ENCODE measurements at regions of chr17 and their contacts with region 1.

Region 1: DNA sequence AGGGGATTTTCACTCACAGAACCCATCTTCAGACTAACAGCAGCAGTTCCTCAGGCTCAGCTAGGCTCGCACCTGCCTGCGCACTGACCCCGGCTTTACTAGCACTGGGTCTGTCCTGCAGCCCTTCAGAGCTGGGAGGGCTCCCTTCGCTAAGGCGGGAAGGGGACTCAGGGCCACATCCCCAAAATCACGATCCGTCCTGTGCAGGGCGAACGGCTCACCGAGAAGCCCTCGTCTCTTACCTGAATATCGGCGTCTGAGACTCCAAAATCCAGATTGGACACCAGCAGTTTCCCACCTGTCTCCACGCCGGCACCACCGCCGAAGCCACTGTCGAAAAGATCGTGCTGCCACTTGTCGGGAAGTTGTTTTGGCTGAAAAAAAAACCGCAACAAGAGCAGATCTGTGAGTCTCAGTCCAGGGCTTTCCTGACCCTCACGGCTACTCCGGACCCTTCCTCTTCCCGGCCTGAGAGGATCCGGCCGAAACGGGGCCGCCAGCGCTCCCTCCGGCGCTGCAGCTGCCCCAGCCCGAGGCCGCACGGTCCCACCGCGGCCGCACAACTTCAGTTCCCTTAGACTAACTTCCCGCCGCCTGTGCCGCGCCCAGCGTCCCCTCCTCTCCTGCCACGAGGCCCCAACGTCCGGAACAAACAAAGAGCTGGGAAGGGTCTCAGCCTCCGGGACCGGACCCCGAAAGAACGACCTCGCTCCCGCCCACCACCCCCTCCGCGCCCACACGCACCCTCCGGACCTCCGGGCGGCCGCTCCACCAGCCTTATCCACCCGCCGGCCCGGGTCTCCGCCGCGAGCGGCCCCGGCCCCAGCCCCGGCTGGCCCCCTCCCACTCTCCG is 713 bp downstream of the ALYREF start:
- DNase-seq: no peak
- H3K4me3 ChIP-seq: peak overlapping the region; percentile 88 to 98 (median 98)
- H3K27ac ChIP-seq: peak overlapping the region; percentile 94 to 96
- H3K4me1 ChIP-seq: peaks cover 4 to 7% of the 10 kb centered on the region in 2 donors
- H3K27me3 ChIP-seq: no peaks in the 10 kb centered on the region
- CTCF ChIP-seq: no peak
- POLR2A ChIP-seq: no peak

Region 2: DNA sequence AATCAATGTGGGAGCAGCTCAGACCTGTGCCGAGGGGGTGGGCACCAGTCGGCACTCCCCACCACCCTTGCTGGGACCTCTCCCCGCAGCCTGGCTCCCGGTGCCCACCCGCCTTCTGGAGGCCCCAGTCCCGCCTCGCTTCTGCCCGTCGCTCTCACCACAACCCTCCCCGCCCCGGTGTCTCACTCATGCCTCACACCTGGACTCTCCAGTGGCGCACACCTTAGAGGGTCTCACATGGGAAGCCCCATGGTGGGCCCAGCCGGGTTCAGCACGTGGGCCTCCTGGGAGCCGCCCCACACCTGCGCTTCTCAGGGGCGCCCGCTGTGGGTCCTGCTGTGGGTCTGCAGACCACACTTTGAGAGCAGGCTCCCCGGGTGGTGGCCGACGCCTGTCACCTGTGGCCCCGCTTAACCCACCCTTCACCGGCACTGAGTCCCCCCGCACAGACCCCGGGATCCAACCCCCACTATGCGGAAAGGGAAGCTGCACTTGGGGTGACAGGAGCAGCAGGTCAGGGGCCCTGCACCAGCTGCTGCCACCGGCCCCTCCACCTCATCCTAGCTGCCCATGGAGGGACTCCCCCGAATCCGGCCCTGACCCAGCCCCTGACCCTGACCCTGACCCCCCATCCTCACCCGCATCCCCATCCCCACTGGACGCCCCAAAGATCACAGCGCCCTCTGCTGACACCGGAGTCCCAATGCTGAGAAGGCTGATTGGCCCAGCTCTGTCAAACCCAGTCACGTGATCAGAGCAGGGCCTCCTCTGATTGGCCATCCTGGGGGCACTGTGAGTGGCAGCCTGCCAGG is 568.2 kb before region 1 on chr17:
- intact Hi-C with region 1: loop called (anchors 5 kb)
- DNase-seq: no peak
- H3K4me3 ChIP-seq: no peak overlapping the region
- H3K27ac ChIP-seq: no peak overlapping the region
- H3K4me1 ChIP-seq: peaks cover 10 to 11% of the 10 kb centered on the region in 2 donors
- H3K27me3 ChIP-seq: no peaks in the 10 kb centered on the region
- CTCF ChIP-seq: no peak
- POLR2A ChIP-seq: no peak

Region 3: DNA sequence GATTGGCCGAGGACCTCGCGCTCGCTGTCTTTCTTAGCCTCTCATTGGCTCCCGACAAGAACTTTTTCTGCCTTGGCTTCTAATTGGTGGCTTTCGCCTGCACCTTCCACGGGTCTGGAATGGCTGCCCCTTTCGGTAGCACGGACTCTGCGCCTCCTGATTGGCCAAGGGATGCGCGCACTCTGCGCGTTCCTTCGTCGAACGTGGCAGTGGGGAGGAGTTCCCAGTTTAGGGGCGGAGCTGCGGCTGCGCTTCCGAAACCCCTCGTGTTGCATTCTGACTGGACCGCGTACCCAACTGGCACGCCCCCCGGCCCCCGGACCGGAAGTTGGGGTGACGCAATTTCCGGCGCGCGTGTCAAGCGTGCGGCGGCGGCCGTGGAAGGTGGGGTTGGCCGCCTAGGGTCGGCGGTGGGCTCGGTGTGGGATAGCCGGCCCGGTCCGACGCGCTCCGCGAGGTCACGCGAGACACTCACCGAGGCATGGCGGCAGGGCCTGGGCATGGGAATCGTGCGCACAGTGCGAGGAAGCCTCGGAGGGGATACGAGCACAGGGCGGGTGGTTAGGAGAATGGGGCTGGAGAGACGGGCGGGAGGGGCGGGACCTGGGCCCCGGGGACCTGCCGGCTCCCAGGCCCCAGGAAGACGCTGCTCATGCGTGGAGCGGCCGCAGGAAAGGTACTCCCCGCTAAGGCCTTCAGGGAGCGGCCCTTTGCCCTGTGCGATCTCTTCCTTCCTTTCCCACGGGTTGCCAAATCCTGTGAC is 29.7 kb before region 1 on chr17:
- intact Hi-C with region 1: no loop called
- DNase-seq: peak; percentile 99 to 100
- H3K4me3 ChIP-seq: peak overlapping the region; percentile 93 to 100 (median 96)
- H3K27ac ChIP-seq: peak overlapping the region; percentile 98
- H3K4me1 ChIP-seq: peaks cover 10 to 15% of the 10 kb centered on the region in 2 donors
- H3K27me3 ChIP-seq: no peaks in the 10 kb centered on the region
- CTCF ChIP-seq: peak; percentile 36 to 74 (median 57)
- POLR2A ChIP-seq: peak; percentile 97

Region 4: DNA sequence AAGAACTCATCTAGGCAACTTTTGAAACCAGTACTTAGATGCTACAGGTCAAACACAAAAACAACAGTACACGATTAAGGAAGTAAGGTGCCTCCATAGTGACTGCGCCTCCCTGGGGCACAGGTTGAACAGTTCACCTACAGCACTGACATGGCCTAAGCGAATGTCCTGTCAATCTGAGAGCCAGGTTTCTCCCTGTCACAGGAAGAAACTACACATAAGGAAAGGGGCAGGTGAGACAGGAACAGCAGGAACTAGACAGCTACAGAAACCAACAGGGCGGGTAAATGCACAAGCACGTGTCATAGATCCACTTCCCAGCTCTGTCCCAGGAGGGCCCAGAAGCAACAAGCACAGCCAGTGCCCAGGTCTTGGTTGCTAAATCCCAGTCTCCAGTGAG is 11.6 kb before region 1 on chr17:
- intact Hi-C with region 1: loop called (anchors 2 kb)
- DNase-seq: no peak
- H3K4me3 ChIP-seq: no peak overlapping the region
- H3K27ac ChIP-seq: no peak overlapping the region
- H3K4me1 ChIP-seq: no peaks in the 10 kb centered on the region
- H3K27me3 ChIP-seq: no peaks in the 10 kb centered on the region
- CTCF ChIP-seq: no peak
- POLR2A ChIP-seq: no peak

Region 5: DNA sequence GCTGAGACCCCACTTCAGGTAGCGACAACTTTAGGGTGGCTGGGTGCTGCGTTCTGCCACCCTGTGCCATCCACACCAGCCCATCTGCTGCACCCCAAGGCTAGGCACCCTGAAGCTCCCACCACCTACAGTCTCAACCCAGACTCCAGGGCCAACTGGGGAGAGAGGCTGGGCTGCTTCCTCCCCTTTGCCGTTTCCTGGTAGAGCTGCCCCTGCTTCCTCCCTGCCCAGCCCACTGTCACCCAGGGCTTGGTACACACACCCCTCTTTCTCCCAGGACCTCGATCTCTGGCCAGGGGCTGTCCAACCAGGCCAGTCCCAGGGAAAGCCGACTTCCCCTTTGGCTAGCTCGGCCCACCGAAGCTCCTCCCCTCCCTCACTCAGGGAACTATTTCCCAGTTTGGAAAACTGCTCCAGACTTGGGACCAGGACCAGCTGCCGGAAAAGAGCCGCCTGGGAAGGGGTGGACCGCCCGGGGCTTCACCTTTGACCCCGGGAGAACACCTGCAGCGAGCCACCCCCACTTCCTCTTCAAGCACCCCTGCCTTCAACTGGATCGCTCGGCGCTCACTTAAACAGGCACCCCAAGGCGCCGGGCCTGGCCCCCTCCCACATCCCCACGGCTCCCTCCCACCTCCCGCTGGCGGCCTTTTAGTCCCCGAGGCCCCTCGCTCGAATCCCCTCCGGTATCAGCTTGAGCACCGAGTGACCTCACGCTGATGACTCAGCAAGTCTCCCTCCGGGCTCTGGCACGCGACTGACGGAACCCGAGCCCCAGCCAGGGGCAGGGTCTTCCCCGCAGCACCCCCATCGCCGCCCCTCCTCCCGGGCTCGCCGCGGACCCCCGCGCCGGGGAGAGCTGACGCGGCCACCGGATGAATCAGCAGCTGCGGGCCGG is 35.8 kb after region 1 on chr17:
- intact Hi-C with region 1: loop called (anchors 1 kb)
- DNase-seq: peak; percentile 63 to 81
- H3K4me3 ChIP-seq: peak overlapping the region; percentile 94 to 100 (median 98)
- H3K27ac ChIP-seq: peak overlapping the region; percentile 94 to 98
- H3K4me1 ChIP-seq: peaks cover 11 to 12% of the 10 kb centered on the region in 2 donors
- H3K27me3 ChIP-seq: no peaks in the 10 kb centered on the region
- CTCF ChIP-seq: no peak
- POLR2A ChIP-seq: no peak

Region 6: DNA sequence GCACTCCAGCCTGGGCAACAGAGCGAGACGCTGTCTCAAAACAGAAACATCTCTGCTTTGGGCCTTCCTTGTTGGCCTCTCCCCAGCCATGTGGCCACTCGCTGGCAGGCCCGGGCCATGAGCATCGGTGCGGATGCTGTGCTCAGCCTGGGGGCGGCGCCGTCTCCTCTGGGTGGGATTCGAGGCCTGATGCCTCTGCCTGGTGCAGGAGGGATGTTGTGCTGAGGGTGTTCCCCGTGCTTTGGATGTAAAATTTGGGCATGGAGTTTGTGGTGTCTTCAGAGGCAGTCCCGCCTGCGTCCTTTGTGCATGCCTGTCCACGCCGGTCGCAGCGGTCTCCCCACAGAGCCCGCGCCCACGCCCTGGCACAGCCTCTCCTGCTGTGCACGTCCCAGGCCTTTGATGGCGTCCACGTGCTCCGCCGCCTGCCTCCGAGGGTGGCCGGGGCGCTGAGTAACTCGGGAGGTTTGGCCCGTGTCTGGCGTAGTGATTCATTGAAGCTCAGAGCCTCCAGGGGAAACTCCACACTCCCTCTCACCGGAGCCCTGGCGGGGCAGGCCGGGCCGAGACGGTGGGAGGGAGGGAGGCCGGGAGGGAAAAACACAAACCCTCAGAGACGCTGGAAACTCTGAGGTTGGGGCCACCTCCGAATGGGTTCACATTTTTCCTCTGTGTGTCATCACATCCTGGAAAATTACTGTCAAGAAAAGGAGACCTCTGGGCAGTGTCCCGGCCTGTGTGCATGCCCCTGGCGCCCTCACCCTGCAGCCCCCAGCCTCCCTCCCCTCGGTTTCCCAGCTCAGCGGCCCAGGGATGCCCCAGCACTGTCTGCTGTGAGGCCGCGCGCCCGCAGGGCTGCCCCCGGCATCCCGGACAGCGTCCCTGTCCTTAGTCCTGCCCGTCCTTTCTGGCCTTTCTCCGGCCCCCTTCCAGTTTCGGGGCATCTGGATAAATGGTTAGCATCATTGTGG is 113.0 kb after region 1 on chr17:
- intact Hi-C with region 1: loop called (anchors 5 kb)
- DNase-seq: peak; percentile 70 to 86
- H3K4me3 ChIP-seq: peak overlapping the region in 2 of 3 donors; percentile 16 to 46
- H3K27ac ChIP-seq: peak overlapping the region; percentile 52 to 65
- H3K4me1 ChIP-seq: peaks cover 4 to 8% of the 10 kb centered on the region in 2 donors
- H3K27me3 ChIP-seq: no peaks in the 10 kb centered on the region
- CTCF ChIP-seq: no peak
- POLR2A ChIP-seq: no peak